Heart left ventricle (tissue), 16 donors: ENCODE measurements at regions of chr17 and their contacts with region 1.

Region 1: DNA sequence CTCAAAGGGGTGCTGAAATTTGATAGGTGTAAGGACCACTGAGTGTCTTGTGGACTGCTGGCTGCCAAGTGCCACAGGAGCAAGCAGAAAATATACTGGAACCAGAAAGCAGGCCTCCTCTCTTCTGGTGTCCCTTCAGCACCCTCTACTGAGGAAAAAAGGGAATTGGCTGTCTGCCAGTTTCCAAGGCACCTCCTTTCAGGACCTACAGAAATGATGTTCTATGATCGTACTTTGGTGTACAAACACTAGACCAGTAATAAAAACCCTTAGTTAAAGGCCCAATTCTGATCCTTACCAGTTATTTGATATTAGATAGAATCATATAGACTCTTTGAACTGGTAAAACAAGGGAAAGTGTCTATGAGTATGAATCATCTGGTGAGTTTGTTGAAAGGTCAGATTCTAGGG is 35.8 kb upstream of the BCAS3 start:
- DNase-seq: peak in 4 of 5 donors; percentile 46 to 78 (median 66)
- ATAC-seq: peak; percentile 29 to 78 (median 75)
- H3K4me3 ChIP-seq: no peak overlapping the region
- H3K27ac ChIP-seq: no peak overlapping the region
- H3K4me1 ChIP-seq: peaks cover 0 to 21% (median 10%) of the 10 kb centered on the region in 12 donors
- H3K27me3 ChIP-seq: no peaks in the 10 kb centered on the region
- CTCF ChIP-seq: peak in 11 of 12 donors; percentile 17 to 71 (median 49)
- POLR2A ChIP-seq: no peak

Region 2: DNA sequence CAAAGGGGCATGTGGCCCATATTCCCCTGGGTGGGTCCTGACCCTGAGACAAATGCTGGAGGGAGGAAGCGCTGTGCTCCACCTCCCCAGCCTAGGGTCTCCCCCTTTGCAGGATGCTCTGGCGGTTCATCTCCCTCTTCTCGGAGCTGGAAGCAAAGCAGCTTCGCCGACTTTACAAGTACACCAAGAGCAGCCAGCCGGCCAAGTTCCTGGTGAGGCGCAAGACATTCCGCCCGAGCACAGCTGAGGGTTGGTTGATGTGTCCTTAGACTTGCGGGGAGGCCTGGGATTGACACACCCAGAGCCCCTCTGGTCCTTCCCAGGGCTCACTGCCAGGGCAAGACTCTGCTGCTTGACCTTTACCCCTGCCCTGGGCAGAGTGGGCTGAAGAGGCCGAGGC is 215.2 kb before region 1 on chr17:
- intact Hi-C with region 1: loop called in 2 of 10 experiments (anchors 5 to 10 kb)
- DNase-seq: no peak
- ATAC-seq: no peak
- H3K4me3 ChIP-seq: no peak overlapping the region
- H3K27ac ChIP-seq: no peak overlapping the region
- H3K4me1 ChIP-seq: peaks cover 0 to 9% (median 3%) of the 10 kb centered on the region in 12 donors
- H3K27me3 ChIP-seq: no peaks in the 10 kb centered on the region
- CTCF ChIP-seq: no peak
- POLR2A ChIP-seq: no peak

Region 3: GRCh38 chr17:60468371-60468770 is 173.4 kb before region 1 on chr17:
- intact Hi-C with region 1: loop called in 5 of 10 experiments (anchors 10 kb)
- DNase-seq: no peak
- ATAC-seq: no peak
- H3K4me3 ChIP-seq: no peak overlapping the region
- H3K27ac ChIP-seq: peak overlapping the region in 2 of 12 donors; percentile 6 to 25
- H3K4me1 ChIP-seq: peaks cover 0 to 33% (median 22%) of the 10 kb centered on the region in 12 donors
- H3K27me3 ChIP-seq: no peaks in the 10 kb centered on the region
- CTCF ChIP-seq: no peak
- POLR2A ChIP-seq: no peak

Region 4: DNA sequence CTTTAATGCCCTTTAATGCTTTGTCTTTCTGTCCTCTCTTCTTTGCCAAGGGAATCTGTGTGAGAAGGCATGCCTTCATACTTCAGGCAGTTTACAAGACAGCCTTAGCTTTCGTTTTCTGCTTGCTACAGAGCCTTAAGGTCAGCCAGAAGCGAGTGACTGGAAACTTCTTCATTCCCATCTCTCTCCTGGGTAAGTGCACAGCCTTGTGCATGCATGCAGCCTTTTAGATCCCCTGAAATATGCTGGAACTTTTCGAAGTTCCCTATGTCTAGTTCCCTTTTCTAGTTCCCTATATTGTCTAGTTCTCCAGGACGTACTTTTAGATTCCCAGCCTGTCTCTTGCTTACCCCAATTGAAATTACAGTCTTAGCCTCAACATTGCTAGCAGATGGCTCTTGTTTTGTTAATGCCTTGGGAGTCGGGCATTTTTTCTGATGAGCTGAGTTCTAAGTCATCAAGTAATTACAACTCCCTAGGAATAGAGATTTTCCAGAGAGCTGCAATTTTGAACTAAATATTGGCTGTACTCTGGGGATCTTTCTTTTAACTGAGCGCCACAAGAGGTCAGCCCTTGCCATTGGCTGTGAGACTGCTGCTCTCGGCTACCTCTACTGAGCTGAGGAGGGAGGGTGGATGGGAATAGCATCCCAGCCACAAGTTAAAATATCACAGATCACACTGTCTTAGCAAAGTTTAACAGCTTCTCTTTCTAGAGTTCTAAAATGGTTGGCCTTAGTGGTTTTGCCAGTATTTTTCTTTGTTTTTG is 64.5 kb before region 1 on chr17:
- intact Hi-C with region 1: loop called (anchors 1 to 5 kb)
- DNase-seq: peak in 3 of 5 donors; percentile 32 to 49 (median 37)
- ATAC-seq: peak; percentile 71 to 81 (median 78)
- H3K4me3 ChIP-seq: peak overlapping the region in 10 of 12 donors; percentile 23 to 53 (median 42)
- H3K27ac ChIP-seq: peak overlapping the region in 11 of 12 donors; percentile 23 to 89 (median 67)
- H3K4me1 ChIP-seq: peaks cover 0 to 58% (median 10%) of the 10 kb centered on the region in 12 donors
- H3K27me3 ChIP-seq: no peaks in the 10 kb centered on the region
- CTCF ChIP-seq: peak; percentile 12 to 61 (median 43)
- POLR2A ChIP-seq: no peak

Region 5: DNA sequence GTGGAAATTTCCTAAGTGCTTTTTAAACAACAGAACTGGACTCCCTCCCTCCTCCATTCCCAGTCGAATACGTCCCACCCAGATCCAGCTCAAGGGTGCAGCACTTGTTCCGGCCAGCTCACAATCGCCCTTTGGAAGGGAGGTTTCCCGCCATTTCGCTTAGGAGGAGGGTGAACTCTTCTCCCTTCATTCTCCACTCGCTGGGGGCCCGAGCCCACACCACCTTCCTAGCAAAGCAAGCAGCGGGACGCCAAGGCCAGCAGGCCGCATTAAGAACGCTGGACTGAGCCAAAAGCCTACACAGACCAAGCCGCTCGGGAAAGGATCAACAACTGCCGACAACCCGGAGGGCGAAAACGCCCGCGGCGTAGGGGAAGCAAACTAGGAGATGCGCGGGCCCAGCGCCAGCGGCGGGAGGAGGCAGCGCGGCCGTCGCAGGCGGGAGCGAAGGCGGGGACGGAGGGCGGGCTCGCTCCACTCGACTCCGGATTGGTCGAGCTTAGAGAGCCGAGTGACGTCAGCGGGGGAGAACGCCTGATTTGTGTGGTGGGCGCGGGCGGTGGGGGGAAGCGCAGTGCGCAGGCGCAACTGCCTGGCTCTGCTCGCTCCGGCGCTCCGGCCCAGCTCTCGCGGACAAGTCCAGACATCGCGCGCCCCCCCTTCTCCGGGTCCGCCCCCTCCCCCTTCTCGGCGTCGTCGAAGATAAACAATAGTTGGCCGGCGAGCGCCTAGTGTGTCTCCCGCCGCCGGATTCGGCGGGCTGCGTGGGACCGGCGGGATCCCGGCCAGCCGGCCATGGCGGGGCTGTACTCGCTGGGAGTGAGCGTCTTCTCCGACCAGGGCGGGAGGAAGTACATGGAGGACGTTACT is 42.0 kb before region 1 on chr17 and contains the start of gene PPM1D:
- intact Hi-C with region 1: loop called in 5 of 10 experiments (anchors 2 to 5 kb)
- DNase-seq: peak; percentile 100
- ATAC-seq: peak; percentile 97 to 98 (median 97)
- H3K4me3 ChIP-seq: peak within 1 kb of the TSS; percentile 67 to 98 (median 92)
- H3K27ac ChIP-seq: peak within 1 kb of the TSS; percentile 89 to 100 (median 97)
- H3K4me1 ChIP-seq: peaks cover 0 to 50% (median 18%) of the 10 kb centered on the region in 12 donors
- H3K27me3 ChIP-seq: no peaks in the 10 kb centered on the region
- CTCF ChIP-seq: no peak
- POLR2A ChIP-seq: peak; percentile 21 to 96
- total RNA-seq, gene PPM1D: 6.2 to 11.4 (median 7.7) TPM

Region 6: GRCh38 chr17:60712675-60713074 is 70.9 kb after region 1 on chr17:
- intact Hi-C with region 1: no loop called
- DNase-seq: no peak
- ATAC-seq: no peak
- H3K4me3 ChIP-seq: no peak overlapping the region
- H3K27ac ChIP-seq: no peak overlapping the region
- H3K4me1 ChIP-seq: no peaks in the 10 kb centered on the region
- H3K27me3 ChIP-seq: no peaks in the 10 kb centered on the region
- CTCF ChIP-seq: no peak
- POLR2A ChIP-seq: no peak